Naive thymus-derived CD4-positive, alpha-beta T cell (primary cell): ENCODE measurements at regions of chr21 and their contacts with region 1.

Region 1: GRCh38 chr21:42337830-42338728 is 12.7 kb downstream of the TFF2 start:
- DNase-seq: peak; percentile 68 to 85 (median 78)
- ATAC-seq: peak; percentile 99
- H3K4me3 ChIP-seq: no peak overlapping the region
- H3K4me3 Mint-ChIP-seq: peak overlapping the region; percentile 28 to 76 (median 60)
- H3K27ac ChIP-seq: no peak overlapping the region
- H3K27ac Mint-ChIP-seq: peak overlapping the region in 7 of 9 donors; percentile 19 to 75 (median 53)
- H3K4me1 ChIP-seq: peaks cover 4 to 7% of the 10 kb centered on the region in 2 donors
- H3K4me1 Mint-ChIP-seq: peaks cover 5 to 12% (median 8%) of the 10 kb centered on the region in 7 donors
- H3K27me3 ChIP-seq: no peaks in the 10 kb centered on the region
- H3K27me3 Mint-ChIP-seq: peaks cover 0 to 32% (median 0%) of the 10 kb centered on the region in 5 donors

Region 2: DNA sequence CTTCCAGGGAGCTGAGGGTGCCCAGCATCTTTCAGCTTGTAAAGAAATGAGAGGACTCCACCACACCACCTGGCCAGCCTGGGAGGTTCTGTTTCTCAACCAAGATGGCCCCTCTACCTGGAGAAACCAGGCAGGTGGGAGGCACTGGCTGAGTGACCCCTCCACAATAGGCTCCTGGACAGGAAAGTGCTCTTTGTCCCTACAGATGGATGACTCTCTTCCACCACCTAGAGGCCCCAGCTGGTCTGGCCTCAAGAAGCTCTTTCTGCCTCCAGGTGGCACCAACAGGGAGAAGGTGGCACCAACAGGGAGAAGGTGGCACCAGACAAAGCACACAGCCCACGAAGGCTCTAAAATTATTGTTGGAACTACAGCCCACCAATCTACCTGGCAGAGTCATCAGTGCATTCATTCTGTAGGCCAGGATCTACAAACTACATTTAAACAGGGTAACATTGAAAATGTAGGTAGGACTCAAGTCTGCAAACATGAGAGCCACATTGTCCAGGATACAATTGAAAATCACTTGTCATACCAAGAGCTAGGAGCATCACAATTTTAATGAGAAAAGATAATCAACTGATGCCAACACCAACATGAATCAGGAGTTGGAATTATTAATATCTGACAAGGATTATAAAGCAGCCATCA is 43.4 kb after region 1 on chr21:
- CTCF ChIA-PET with region 1: no interaction called
- POLR2A ChIA-PET with region 1: no interaction called
- intact Hi-C with region 1: loop called in 1 of 2 experiments (anchors 1 kb)
- DNase-seq: peak in 4 of 9 donors; percentile 22 to 41 (median 29)
- ATAC-seq: peak; percentile 77
- H3K4me3 ChIP-seq: no peak overlapping the region
- H3K4me3 Mint-ChIP-seq: no peak overlapping the region
- H3K27ac ChIP-seq: no peak overlapping the region
- H3K27ac Mint-ChIP-seq: peak overlapping the region in 2 of 9 donors; percentile 29 to 71
- H3K4me1 ChIP-seq: peaks cover 0 to 14% of the 10 kb centered on the region in 2 donors
- H3K4me1 Mint-ChIP-seq: peaks cover 6 to 29% (median 25%) of the 10 kb centered on the region in 7 donors
- H3K27me3 ChIP-seq: no peaks in the 10 kb centered on the region
- H3K27me3 Mint-ChIP-seq: no peaks in the 10 kb centered on the region

Region 3: GRCh38 chr21:42437786-42438645 is 99.9 kb after region 1 on chr21:
- CTCF ChIA-PET with region 1: interaction called, 3 read pairs
- POLR2A ChIA-PET with region 1: no interaction called
- intact Hi-C with region 1: loop called in 1 of 2 experiments (anchors 10 kb)
- DNase-seq: no peak
- ATAC-seq: no peak
- H3K4me3 ChIP-seq: no peak overlapping the region
- H3K4me3 Mint-ChIP-seq: no peak overlapping the region
- H3K27ac ChIP-seq: no peak overlapping the region
- H3K27ac Mint-ChIP-seq: peak overlapping the region in 6 of 9 donors; percentile 14 to 82 (median 66)
- H3K4me1 ChIP-seq: peaks cover 10 to 21% of the 10 kb centered on the region in 2 donors
- H3K4me1 Mint-ChIP-seq: peaks cover 35 to 72% (median 56%) of the 10 kb centered on the region in 7 donors
- H3K27me3 ChIP-seq: no peaks in the 10 kb centered on the region
- H3K27me3 Mint-ChIP-seq: no peaks in the 10 kb centered on the region

Region 4: DNA sequence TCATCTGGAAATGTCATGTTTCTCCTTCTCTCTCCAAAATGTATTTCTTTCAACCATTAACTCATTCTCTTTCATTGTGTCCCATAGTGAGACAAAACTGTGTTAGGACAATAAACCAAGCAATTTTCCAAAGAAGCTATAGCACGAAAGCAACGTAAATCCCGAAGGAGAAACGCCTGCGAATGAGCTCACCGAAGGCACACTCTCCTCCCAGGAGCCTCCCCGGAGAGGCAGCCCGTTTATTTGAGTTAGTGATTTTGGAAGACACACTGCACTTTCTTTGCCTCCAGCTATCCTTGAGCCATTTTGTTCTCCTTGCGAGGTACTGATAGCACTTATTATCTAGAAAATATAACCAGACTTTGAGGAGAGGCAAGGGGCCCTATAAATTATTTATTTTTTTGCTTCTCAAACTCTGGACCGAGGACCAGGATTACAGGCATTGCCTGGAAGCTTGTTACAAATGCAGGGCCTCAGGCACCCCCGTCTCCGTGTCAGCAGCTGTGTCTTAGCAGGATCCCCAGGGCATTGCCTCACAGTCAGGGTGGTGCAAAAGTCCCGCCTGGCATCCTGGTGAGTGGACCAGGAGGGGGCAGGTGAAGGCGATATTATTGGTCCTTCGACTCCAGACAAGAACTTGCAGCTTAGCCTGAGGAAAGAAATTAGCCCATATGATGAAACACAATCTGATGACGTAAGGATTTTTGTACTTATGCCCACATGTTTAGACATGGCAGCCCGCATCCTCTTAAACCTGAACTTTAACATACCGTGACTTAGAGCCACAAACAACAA is 116.9 kb after region 1 on chr21:
- CTCF ChIA-PET with region 1: interaction called, 19 read pairs
- POLR2A ChIA-PET with region 1: interaction called, 5 read pairs
- intact Hi-C with region 1: loop called (anchors 1 kb)
- DNase-seq: no peak
- ATAC-seq: no peak
- H3K4me3 ChIP-seq: no peak overlapping the region
- H3K4me3 Mint-ChIP-seq: peak overlapping the region in 1 of 10 donors; percentile 17
- H3K27ac ChIP-seq: no peak overlapping the region
- H3K27ac Mint-ChIP-seq: peak overlapping the region in 2 of 9 donors; percentile 32 to 45
- H3K4me1 ChIP-seq: peaks cover 0 to 17% of the 10 kb centered on the region in 2 donors
- H3K4me1 Mint-ChIP-seq: peaks cover 19 to 61% (median 48%) of the 10 kb centered on the region in 7 donors
- H3K27me3 ChIP-seq: no peaks in the 10 kb centered on the region
- H3K27me3 Mint-ChIP-seq: no peaks in the 10 kb centered on the region

Region 5: GRCh38 chr21:42537106-42537742 is 199.1 kb after region 1 on chr21:
- CTCF ChIA-PET with region 1: interaction called, 4 read pairs
- POLR2A ChIA-PET with region 1: no interaction called
- intact Hi-C with region 1: loop called in 1 of 2 experiments (anchors 1 kb)
- DNase-seq: peak in 2 of 9 donors; percentile 18 to 42
- ATAC-seq: no peak
- H3K4me3 ChIP-seq: no peak overlapping the region
- H3K4me3 Mint-ChIP-seq: no peak overlapping the region
- H3K27ac ChIP-seq: no peak overlapping the region
- H3K27ac Mint-ChIP-seq: peak overlapping the region in 1 of 9 donors; percentile 23
- H3K4me1 ChIP-seq: peaks cover 0 to 5% of the 10 kb centered on the region in 2 donors
- H3K4me1 Mint-ChIP-seq: peaks cover 5 to 18% (median 13%) of the 10 kb centered on the region in 7 donors
- H3K27me3 ChIP-seq: no peaks in the 10 kb centered on the region
- H3K27me3 Mint-ChIP-seq: no peaks in the 10 kb centered on the region

Region 6: GRCh38 chr21:42581993-42582786 is 244.1 kb after region 1 on chr21:
- CTCF ChIA-PET with region 1: no interaction called
- POLR2A ChIA-PET with region 1: no interaction called
- intact Hi-C with region 1: no loop called
- DNase-seq: no peak
- ATAC-seq: no peak
- H3K4me3 ChIP-seq: no peak overlapping the region
- H3K4me3 Mint-ChIP-seq: no peak overlapping the region
- H3K27ac ChIP-seq: no peak overlapping the region
- H3K27ac Mint-ChIP-seq: peak overlapping the region in 1 of 9 donors; percentile 19
- H3K4me1 ChIP-seq: no peaks in the 10 kb centered on the region
- H3K4me1 Mint-ChIP-seq: peaks cover 0 to 5% (median 2%) of the 10 kb centered on the region in 7 donors
- H3K27me3 ChIP-seq: no peaks in the 10 kb centered on the region
- H3K27me3 Mint-ChIP-seq: no peaks in the 10 kb centered on the region